ENCODE measurements at regions of chr5 and their contacts with region 1.

Region 1: GRCh38 chr5:116023619-116024018 is 8.7 kb upstream of the ARL14EPL start:
- DNase-seq: no peak
- H3K4me3 ChIP-seq: no peak overlapping the region
- H3K27ac ChIP-seq: no peak overlapping the region
- H3K4me1 ChIP-seq: no peaks in the 10 kb centered on the region
- H3K27me3 ChIP-seq: no peaks in the 10 kb centered on the region
- CTCF ChIP-seq: no peak
- POLR2A ChIP-seq: no peak

Region 2: DNA sequence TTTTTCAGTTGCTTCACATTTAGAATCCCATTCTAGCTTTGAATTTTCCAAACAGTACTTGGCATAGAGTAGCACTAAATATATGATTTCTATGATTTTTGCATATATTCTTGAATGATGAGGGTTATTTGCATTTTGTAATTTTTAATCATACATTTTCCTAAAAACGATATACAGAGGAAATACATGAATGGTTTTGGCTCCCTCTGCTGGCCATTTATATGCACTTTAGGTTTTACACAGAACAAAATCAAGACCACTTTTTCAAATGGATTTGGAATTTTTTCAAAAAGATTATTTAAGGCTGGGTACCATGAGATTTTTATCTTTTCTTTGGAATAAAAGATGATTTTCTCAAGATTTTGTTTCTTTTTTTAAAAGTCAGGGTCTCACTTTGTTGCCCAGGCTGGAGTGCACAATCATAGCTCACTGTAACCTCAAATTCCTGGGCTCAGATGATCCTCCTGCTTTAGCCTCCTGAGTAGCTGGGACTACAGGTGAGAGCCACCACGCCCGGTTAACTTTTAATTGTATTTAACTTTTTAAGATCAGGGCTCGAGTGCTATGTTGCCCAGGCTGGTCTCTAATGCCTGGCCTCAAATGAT is 44.5 kb after region 1 on chr5:
- CTCF ChIA-PET with region 1: no interaction called
- POLR2A ChIA-PET with region 1: no interaction called
- dilution Hi-C with region 1: no loop called
- intact Hi-C with region 1: loop called (anchors 1 kb)
- DNase-seq: peak; percentile 61
- H3K4me3 ChIP-seq: no peak overlapping the region
- H3K27ac ChIP-seq: no peak overlapping the region
- H3K4me1 ChIP-seq: no peaks in the 10 kb centered on the region
- H3K27me3 ChIP-seq: peaks cover 0 to 7% of the 10 kb centered on the region in 2 experiments
- CTCF ChIP-seq: peak; percentile 43 to 51
- POLR2A ChIP-seq: no peak

Measured in endothelial cell of umbilical vein (primary cell).